BJ (cell line): ENCODE measurements at regions of chr21 and their contacts with region 1.

Region 1: GRCh38 chr21:36945496-36946138 is 20.9 kb downstream of the HLCS start:
- DNase-seq: no peak
- H3K4me3 ChIP-seq: no peak overlapping the region
- H3K27me3 ChIP-seq: no peaks in the 10 kb centered on the region
- CTCF ChIP-seq: no peak

Region 2: GRCh38 chr21:36927719-36928117 is 17.9 kb before region 1 on chr21:
- CTCF ChIA-PET with region 1: interaction called, 23 read pairs
- POLR2A ChIA-PET with region 1: no interaction called
- DNase-seq: peak; percentile 67
- H3K4me3 ChIP-seq: no peak overlapping the region
- H3K27me3 ChIP-seq: no peaks in the 10 kb centered on the region
- CTCF ChIP-seq: peak; percentile 90

Region 3: GRCh38 chr21:36934864-36935420 is 10.7 kb before region 1 on chr21:
- CTCF ChIA-PET with region 1: interaction called, 23 read pairs
- POLR2A ChIA-PET with region 1: no interaction called
- DNase-seq: no peak
- H3K4me3 ChIP-seq: no peak overlapping the region
- H3K27me3 ChIP-seq: no peaks in the 10 kb centered on the region
- CTCF ChIP-seq: no peak